ENCODE measurements at regions of chr2 and their contacts with region 1.

Region 1: GRCh38 chr2:215917953-215918620 is 95.3 kb downstream of the MREG start:
- DNase-seq: no peak
- ATAC-seq: no peak

Region 2: DNA sequence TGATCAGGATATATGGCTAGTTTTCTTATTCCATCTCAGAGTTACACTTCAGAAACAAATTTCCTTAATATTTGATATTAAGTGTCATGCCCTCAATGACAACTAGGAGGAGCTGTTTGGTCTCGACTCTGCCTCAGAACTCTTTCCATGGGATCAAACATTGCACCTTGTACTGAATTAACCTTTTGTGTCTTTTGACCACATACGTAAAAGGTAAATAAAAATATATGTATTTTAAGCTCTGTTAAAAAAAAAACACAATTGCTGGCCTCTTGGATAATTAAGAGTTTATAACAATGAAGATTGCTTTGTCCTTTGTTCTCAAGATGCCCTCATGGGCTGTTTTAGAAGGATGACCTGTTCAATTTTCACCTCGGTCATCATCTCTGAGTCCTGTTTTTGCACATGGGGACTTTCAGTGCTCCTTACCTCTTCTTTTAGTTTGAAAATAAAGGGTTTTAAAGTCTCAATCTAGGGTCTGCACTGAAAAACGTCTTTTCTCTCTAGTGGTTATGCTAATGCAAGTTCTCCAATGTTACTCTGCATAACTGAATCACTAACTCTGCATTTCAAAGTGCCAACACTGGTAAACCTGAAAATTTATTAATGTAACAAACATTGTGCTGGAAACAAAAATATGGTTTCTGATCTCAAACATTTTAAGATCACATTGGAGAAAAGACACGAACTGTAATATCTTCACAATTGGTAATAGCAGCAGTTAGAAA is 463.4 kb before region 1 on chr2:
- intact Hi-C with region 1: loop called in 1 of 2 experiments (anchors 10 kb)
- DNase-seq: no peak
- ATAC-seq: peak; percentile 62

Measured in left colon (tissue), 2 donors.